OCI-LY7 (cell line): ENCODE measurements at regions of chr19 and their contacts with region 1.

Region 1: DNA sequence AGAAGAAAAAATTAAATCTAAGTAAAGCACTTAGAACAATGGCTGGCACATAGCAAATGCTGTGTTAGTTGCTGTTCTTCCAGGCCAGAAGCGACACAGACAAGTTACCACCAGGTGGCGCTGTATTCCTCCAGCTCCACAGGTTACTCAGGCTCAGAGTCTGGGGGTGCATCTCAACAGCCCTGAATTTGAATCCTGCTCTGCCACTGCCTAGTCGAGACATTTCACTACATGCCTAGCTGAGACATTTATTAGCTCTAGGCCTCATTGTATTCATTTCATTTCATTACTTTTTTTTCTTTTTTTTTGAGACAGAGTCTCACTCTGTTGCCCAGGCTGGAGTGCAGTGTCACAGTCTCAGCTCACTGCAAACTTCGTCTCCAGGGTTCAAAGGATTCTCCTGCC is 16.4 kb upstream of the CYP2B6 start:
- DNase-seq: peak; percentile 75
- H3K4me3 ChIP-seq: no peak overlapping the region
- H3K27ac ChIP-seq: no peak overlapping the region
- H3K4me1 ChIP-seq: no peaks in the 10 kb centered on the region
- CTCF ChIP-seq: peak; percentile 86

Region 2: DNA sequence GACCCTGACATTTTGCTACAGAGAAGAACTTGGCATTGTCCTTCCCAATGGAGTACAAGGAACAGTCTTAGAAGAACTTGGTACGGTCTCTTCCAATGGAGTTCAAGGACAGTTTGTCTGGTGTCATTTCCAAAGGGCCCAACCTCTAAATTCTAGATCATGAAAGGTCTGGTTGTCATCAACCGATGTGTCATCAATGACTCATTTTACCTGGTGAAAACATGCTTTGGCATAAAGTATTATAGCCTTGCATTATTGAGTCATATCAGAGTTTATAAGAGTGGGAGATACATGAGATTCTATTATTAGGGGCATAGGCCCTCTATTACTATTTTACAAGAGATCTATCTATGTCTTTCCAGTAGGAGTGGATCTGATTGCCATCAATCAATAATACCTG is 20.7 kb after region 1 on chr19:
- CTCF ChIA-PET with region 1: no interaction called
- POLR2A ChIA-PET with region 1: no interaction called
- intact Hi-C with region 1: no loop called
- DNase-seq: no peak
- H3K4me3 ChIP-seq: no peak overlapping the region
- H3K27ac ChIP-seq: no peak overlapping the region
- H3K4me1 ChIP-seq: no peaks in the 10 kb centered on the region
- CTCF ChIP-seq: no peak

Region 3: GRCh38 chr19:41144403-41144802 is 169.8 kb after region 1 on chr19:
- CTCF ChIA-PET with region 1: no interaction called
- POLR2A ChIA-PET with region 1: no interaction called
- intact Hi-C with region 1: loop called (anchors 1 kb)
- DNase-seq: peak; percentile 74
- H3K4me3 ChIP-seq: no peak overlapping the region
- H3K27ac ChIP-seq: no peak overlapping the region
- H3K4me1 ChIP-seq: no peaks in the 10 kb centered on the region
- CTCF ChIP-seq: peak; percentile 85